Motor neuron (in vitro differentiated cells): ENCODE measurements at regions of chr2 and their contacts with region 1.

Region 1: GRCh38 chr2:38274286-38275276 is 102.5 kb downstream of the ATL2 start:
- ATAC-seq: peak in 7 of 8 experiments; percentile 50 to 91 (median 68)
- H3K4me3 ChIP-seq: no peak overlapping the region
- H3K27ac ChIP-seq: no peak overlapping the region
- H3K4me1 ChIP-seq: no peaks in the 10 kb centered on the region

Region 2: GRCh38 chr2:37982147-37982582 is 292.4 kb before region 1 on chr2:
- in situ Hi-C with region 1: loop called in 3 of 9 experiments (anchors 25 kb)
- ATAC-seq: peak in 3 of 8 experiments; percentile 40 to 49 (median 46)
- H3K4me3 ChIP-seq: no peak overlapping the region
- H3K27ac ChIP-seq: no peak overlapping the region
- H3K4me1 ChIP-seq: no peaks in the 10 kb centered on the region

Region 3: DNA sequence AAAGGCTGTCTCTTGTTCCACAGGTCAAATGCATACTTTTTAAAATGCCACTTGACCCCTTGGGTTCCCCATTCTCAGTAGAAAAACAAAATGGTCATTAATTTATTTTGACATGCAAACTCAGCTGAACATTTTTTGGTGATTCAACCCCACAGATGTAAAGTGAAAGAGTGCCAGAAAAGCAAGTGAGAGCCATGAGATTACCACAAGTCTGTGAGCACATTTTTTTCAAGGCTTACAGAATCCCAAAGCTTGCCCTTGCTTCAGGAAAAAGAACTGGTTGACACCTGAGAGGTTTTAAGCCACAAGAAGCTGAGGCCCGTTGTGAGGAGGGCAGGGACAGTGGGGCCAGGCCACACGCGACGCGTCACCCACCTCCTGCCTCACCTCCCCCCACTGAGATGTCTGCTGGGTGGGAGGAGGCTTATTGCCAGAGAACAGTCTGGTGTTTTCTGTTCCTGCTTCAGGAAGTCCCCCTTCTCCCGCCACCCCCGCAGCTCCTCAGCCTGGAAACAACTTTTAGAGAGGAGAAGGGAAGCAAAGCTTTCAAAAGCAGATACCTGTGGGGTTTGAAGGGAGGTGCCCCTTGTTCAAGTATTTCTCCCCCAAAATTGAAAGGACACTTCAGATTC is 128.2 kb before region 1 on chr2:
- in situ Hi-C with region 1: no loop called
- ATAC-seq: peak in 5 of 8 experiments; percentile 25 to 80 (median 58)
- H3K4me3 ChIP-seq: no peak overlapping the region
- H3K27ac ChIP-seq: peak overlapping the region in 1 of 2 donors; percentile 26
- H3K4me1 ChIP-seq: no peaks in the 10 kb centered on the region

Region 4: GRCh38 chr2:38174646-38175423 is 99.7 kb before region 1 on chr2:
- in situ Hi-C with region 1: no loop called
- ATAC-seq: peak in 3 of 8 experiments; percentile 76 to 92 (median 90)
- H3K4me3 ChIP-seq: no peak overlapping the region
- H3K27ac ChIP-seq: no peak overlapping the region
- H3K4me1 ChIP-seq: peaks cover 0 to 8% of the 10 kb centered on the region in 2 donors